ENCODE measurements at regions of chr9 and their contacts with region 1.

Region 1: DNA sequence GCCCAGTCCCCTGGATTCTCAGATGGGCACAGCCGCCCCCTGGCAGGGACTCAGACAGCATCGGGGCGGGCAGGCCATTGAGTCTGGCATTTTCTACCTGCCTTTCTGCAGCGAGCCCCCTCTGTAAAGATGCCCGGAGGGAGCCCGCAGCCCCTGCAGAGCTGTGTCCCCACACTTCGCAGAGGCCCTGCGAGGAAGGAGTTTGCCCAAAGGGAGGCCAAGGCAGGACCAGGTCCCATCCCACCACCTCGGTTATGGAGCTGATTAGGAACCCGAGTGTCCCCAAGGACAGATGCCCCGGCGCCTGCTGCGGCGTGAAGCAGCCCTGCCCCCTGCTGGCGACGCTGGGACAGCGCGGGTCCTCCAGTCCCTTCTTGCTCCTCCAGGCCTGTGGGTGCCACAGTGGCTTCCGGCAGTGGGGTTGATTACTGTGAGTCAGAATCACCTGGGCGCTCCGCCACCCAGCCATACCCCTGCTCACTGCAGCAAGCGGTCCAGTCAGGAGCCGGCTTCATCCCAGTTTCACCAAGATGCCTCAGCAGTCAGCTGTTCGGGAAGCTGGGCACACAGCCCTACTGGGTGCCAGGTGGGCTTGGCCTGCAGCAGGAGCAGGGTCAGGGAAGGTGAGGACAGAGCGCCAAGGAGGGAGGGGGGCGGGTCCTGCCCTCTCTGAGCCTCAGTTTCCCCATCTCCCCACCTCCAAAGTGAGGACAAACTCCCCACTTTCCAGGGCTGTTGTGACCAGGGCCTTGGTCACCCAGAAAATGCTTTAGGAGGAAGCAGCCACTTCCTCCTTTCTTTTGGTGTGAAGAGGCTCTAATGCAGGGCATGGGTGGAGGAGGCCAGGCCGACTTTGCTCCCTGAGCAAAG is 117.1 kb downstream of the RXRA start:
- DNase-seq: peak; percentile 38 to 87
- H3K4me3 ChIP-seq: no peak overlapping the region
- H3K27ac ChIP-seq: no peak overlapping the region
- H3K4me1 ChIP-seq: no peaks in the 10 kb centered on the region; a peak in 1 of 7 replicates
- H3K27me3 ChIP-seq: no peaks in the 10 kb centered on the region
- CTCF ChIP-seq: peak in 2 of 3 experiments; percentile 90 to 93; a peak in 3 of 4 replicates
- EP300 ChIP-seq: no peak
- POLR2A ChIP-seq: no peak
- RAD21 ChIP-seq: peak; percentile 96 to 97

Region 2: GRCh38 chr9:134171316-134172197 is 271.8 kb before region 1 on chr9:
- CTCF ChIA-PET with region 1: interaction called, 53 read pairs
- POLR2A ChIA-PET with region 1: interaction called, 3 read pairs
- DNase-seq: no peak
- H3K4me3 ChIP-seq: no peak overlapping the region
- H3K27ac ChIP-seq: no peak overlapping the region
- H3K4me1 ChIP-seq: peaks cover 0 to 19% (median 12%) of the 10 kb centered on the region in 4 experiments; a peak in 6 of 7 replicates
- H3K27me3 ChIP-seq: no peaks in the 10 kb centered on the region
- CTCF ChIP-seq: no peak
- EP300 ChIP-seq: no peak
- POLR2A ChIP-seq: no peak
- RAD21 ChIP-seq: no peak

Region 3: GRCh38 chr9:134178768-134179551 is 264.4 kb before region 1 on chr9:
- CTCF ChIA-PET with region 1: interaction called, 18 read pairs
- POLR2A ChIA-PET with region 1: no interaction called
- DNase-seq: no peak
- H3K4me3 ChIP-seq: no peak overlapping the region
- H3K27ac ChIP-seq: no peak overlapping the region
- H3K4me1 ChIP-seq: peaks cover 0 to 20% (median 12%) of the 10 kb centered on the region in 4 experiments; a peak in 6 of 7 replicates
- H3K27me3 ChIP-seq: no peaks in the 10 kb centered on the region
- CTCF ChIP-seq: no peak
- EP300 ChIP-seq: no peak
- POLR2A ChIP-seq: no peak
- RAD21 ChIP-seq: no peak

Region 4: DNA sequence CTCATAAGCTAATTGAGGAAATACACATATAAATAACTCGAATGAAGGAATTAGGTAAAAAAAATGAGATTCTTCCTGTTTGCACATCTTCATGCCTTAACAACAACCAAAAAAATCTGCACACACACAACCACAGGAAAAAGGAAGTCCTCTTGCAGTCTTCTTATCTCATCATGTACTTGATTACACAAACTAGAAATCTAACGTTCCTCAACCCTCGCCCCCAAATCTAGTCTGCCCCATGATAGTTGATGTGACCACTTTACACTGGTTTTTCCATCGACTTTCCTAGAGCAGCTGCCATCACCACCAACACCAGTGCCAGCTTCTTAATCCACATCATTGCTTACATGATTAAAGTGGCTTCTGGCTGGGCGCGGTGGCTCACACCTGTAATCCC is 247.8 kb before region 1 on chr9:
- CTCF ChIA-PET with region 1: interaction called, 13 read pairs
- POLR2A ChIA-PET with region 1: no interaction called
- DNase-seq: no peak
- H3K4me3 ChIP-seq: no peak overlapping the region
- H3K27ac ChIP-seq: no peak overlapping the region
- H3K4me1 ChIP-seq: no peaks in the 10 kb centered on the region; a peak in 1 of 7 replicates
- H3K27me3 ChIP-seq: 0 out of 7 replicates have a peak, but pooled peaks cover 0 to 2% (median 0%) of the 10 kb centered on the region in 4 experiments
- CTCF ChIP-seq: no peak
- EP300 ChIP-seq: no peak
- POLR2A ChIP-seq: no peak
- RAD21 ChIP-seq: no peak

Region 5: DNA sequence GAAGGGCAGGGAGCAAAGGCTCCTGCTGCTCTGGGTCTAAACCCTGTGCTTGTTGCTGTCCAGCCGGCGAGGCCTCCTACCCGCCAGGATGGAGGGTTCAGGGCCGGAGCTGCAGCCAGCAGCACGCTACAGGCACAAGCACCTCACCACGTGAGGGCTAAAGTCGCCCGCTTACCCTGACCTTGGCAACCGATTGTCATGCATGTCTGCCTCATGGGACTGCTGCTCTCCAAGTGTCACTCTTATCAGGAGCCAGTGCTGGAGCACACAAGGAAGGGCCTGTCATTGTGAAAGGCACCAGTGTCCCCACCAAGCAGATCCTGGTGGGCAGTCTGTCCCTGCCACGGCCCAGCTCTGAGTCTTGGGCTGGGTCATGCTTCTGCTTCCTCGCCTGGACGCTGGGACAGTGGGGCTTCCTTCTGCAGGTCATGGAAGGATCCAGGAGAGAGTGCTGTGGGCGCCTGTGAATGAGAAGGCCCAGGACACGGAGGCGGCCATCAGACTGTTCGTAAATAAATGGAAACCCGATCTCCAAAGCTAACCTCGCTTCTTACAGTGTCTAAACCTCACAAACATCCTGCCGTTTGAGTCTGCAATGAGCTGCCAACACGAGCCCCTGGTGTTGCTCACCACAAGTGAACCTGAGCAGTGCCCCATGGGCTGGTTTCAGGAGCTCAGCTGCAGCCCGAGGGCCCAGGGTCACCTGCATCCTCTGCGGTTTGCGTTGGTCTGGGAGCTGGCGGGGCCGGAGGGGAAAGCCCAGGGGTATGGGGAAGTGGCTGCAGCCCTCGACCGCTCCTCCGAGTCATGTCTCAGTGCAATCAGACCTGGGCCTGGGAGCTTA is 175.3 kb before region 1 on chr9:
- CTCF ChIA-PET with region 1: interaction called, 15 read pairs
- POLR2A ChIA-PET with region 1: no interaction called
- DNase-seq: no peak
- H3K4me3 ChIP-seq: no peak overlapping the region
- H3K27ac ChIP-seq: no peak overlapping the region
- H3K4me1 ChIP-seq: peaks cover 0 to 4% (median 2%) of the 10 kb centered on the region in 4 experiments; a peak in 4 of 7 replicates
- H3K27me3 ChIP-seq: no peaks in the 10 kb centered on the region
- CTCF ChIP-seq: no peak
- EP300 ChIP-seq: no peak
- POLR2A ChIP-seq: no peak
- RAD21 ChIP-seq: no peak

Region 6: GRCh38 chr9:134326724-134327601 is 116.4 kb before region 1 on chr9:
- CTCF ChIA-PET with region 1: interaction called, 11 read pairs
- POLR2A ChIA-PET with region 1: no interaction called
- DNase-seq: no peak
- H3K4me3 ChIP-seq: peak overlapping the region; percentile 63 to 81 (median 70)
- H3K27ac ChIP-seq: no peak overlapping the region
- H3K4me1 ChIP-seq: peaks cover 0 to 41% (median 23%) of the 10 kb centered on the region in 4 experiments; a peak in 6 of 7 replicates
- H3K27me3 ChIP-seq: peaks cover 0 to 6% (median 2%) of the 10 kb centered on the region in 4 experiments; a peak in 2 of 7 replicates
- CTCF ChIP-seq: no peak
- EP300 ChIP-seq: no peak
- POLR2A ChIP-seq: no peak
- RAD21 ChIP-seq: no peak

Region 7: GRCh38 chr9:134433101-134433500 is 10.3 kb before region 1 on chr9:
- CTCF ChIA-PET with region 1: interaction called, 26 read pairs
- POLR2A ChIA-PET with region 1: no interaction called
- DNase-seq: no peak
- H3K4me3 ChIP-seq: no peak overlapping the region
- H3K27ac ChIP-seq: no peak overlapping the region
- H3K4me1 ChIP-seq: peaks cover 0 to 8% (median 4%) of the 10 kb centered on the region in 4 experiments; a peak in 3 of 7 replicates
- H3K27me3 ChIP-seq: no peaks in the 10 kb centered on the region
- CTCF ChIP-seq: no peak
- EP300 ChIP-seq: no peak
- POLR2A ChIP-seq: no peak
- RAD21 ChIP-seq: no peak

Region 8: GRCh38 chr9:134725605-134725940 is 282.2 kb after region 1 on chr9:
- CTCF ChIA-PET with region 1: no interaction called
- POLR2A ChIA-PET with region 1: no interaction called
- DNase-seq: no peak
- H3K4me3 ChIP-seq: no peak overlapping the region
- H3K27ac ChIP-seq: no peak overlapping the region
- H3K4me1 ChIP-seq: no peaks in the 10 kb centered on the region; a peak in 1 of 7 replicates
- H3K27me3 ChIP-seq: no peaks in the 10 kb centered on the region
- CTCF ChIP-seq: no peak
- EP300 ChIP-seq: no peak
- POLR2A ChIP-seq: no peak
- RAD21 ChIP-seq: no peak